Stomach (tissue), 19 donors: ENCODE measurements at regions of chr11 and their contacts with region 1.

Region 1: GRCh38 chr11:75203138-75203537 is 37.4 kb upstream of the TPBGL start:
- DNase-seq: no peak
- H3K4me3 ChIP-seq: no peak overlapping the region
- H3K27ac ChIP-seq: no peak overlapping the region
- H3K4me1 ChIP-seq: no peaks in the 10 kb centered on the region
- H3K27me3 ChIP-seq: peaks cover 0 to 5% (median 0%) of the 10 kb centered on the region in 3 donors
- CTCF ChIP-seq: no peak
- EP300 ChIP-seq: no peak
- POLR2A ChIP-seq: no peak

Region 2: DNA sequence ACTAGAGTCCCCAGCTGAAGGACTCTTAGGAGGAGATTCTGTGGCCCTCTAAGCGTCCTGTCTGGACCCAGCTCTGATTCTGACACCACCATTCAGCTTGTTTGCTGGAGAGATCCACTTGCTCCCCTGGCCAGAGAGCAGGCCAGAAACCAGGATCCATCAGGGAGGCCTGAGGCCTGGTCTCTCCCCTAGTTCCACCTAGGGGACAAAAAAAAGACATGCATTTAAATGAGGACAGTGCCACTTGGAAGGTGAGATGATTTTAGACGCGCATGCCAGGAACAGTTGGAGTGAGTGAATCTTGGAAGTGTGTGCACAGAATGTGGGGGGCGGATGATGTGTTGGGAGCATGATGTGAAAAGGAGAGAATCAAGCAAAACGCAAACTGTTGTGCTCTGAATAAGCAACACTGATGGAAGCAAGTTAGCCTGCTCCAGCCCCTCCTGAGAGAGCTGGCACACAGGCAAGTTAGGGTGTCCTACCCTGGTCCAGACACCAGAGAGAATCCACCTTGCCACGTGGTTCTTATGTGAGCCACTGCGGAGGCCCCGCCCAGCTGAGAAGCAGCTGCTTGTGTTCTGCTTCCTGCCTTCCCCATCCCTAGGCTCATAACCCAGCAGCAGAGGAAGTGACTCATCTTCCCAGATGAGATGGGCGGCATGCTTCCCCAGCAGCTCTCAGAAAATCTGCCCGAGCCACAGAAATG is 60.3 kb before region 1 on chr11:
- intact Hi-C with region 1: loop called (anchors 2 kb)
- DNase-seq: peak; percentile 44 to 86
- H3K4me3 ChIP-seq: no peak overlapping the region
- H3K27ac ChIP-seq: peak overlapping the region in 1 of 5 donors; percentile 52
- H3K4me1 ChIP-seq: peaks cover 0 to 38% (median 12%) of the 10 kb centered on the region in 4 donors
- H3K27me3 ChIP-seq: no peaks in the 10 kb centered on the region
- CTCF ChIP-seq: no peak
- EP300 ChIP-seq: no peak
- POLR2A ChIP-seq: no peak

Region 3: GRCh38 chr11:75248690-75249268 is 45.6 kb after region 1 on chr11:
- intact Hi-C with region 1: no loop called
- DNase-seq: peak; percentile 89 to 96
- H3K4me3 ChIP-seq: no peak overlapping the region
- H3K27ac ChIP-seq: no peak overlapping the region
- H3K4me1 ChIP-seq: peaks cover 0 to 9% (median 4%) of the 10 kb centered on the region in 4 donors
- H3K27me3 ChIP-seq: peaks cover 0 to 22% (median 0%) of the 10 kb centered on the region in 3 donors
- CTCF ChIP-seq: peak in 6 of 7 experiments; percentile 31 to 98 (median 94)
- EP300 ChIP-seq: no peak
- POLR2A ChIP-seq: no peak

Region 4: DNA sequence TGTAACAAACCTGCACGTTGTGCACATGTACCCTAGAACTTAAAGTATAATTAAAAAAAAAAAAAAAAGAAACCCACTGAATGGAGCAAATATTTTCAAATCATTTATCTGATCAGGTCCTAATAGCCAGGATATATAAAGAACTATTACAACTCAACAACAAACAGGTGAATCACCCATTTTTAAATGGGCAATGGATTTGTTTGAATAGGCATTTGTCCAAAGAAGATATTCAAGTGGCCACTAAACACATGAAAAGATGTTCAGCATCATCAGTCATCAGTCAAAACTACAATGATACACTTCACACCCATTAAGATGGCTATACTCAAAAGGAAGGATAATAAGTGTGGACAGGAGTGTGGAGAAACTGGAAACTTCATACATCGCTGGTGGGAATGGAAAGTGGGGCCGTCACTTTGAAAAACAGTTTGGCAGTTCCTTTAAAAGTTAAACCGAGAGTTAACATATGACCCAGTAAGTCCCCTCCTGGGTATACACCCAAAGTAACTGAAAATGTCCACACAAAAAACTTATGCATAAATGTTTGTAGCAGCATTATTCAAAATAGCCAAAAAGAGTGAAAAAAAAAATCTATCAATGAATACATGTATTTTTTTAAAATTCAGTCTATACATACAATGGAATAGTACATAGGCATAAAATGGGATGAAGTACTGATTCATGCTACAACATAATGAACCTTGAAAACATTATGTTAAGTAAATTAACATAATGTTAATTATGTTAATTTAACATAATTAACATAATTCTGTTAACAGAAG is 95.2 kb after region 1 on chr11:
- intact Hi-C with region 1: no loop called
- DNase-seq: no peak
- H3K4me3 ChIP-seq: no peak overlapping the region
- H3K27ac ChIP-seq: no peak overlapping the region
- H3K4me1 ChIP-seq: peaks cover 20 to 31% (median 31%) of the 10 kb centered on the region in 4 donors
- H3K27me3 ChIP-seq: no peaks in the 10 kb centered on the region
- CTCF ChIP-seq: no peak
- EP300 ChIP-seq: no peak
- POLR2A ChIP-seq: no peak

Region 5: DNA sequence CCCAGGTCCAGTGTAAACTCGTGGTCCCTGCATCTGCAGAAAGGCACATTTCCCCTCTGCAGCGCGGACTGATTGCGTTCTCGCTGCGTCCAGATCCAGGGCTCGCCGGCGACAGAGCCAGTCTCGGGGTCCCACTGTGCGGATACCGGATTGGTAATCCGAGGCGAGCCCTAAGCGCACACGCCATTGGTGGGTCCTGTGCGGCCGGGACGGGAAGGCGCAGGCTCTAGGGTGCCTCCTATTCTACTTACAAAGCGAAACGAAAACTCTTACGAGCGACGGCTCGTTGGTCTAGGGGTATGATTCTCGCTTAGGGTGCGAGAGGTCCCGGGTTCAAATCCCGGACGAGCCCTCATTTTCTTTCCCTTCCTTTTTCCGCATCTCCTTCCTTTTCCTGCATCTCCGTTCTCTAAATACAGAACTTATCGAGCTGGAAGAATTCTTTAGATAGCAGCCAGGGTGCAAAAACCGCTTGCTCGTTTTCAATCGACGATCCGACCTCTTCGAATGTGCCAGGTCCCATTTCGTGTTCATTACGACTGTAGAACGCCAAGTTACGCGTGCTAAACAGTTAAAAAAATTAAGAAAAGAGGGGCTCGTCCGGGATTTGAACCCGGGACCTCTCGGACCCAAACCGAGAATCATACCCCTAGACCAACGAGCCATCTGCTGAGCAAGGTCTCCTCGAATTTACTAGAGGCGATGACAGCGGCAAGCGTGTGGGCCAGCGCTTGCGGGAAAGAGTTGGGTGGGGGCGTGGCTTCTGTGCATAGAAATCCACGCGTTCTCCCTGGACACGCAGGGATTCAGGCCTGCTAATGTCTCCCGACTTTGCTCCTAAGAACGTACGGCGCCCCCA is 1032.3 kb after region 1 on chr11:
- intact Hi-C with region 1: no loop called
- DNase-seq: peak; percentile 89 to 97
- H3K4me3 ChIP-seq: peak overlapping the region; percentile 80 to 97 (median 91)
- H3K27ac ChIP-seq: peak overlapping the region; percentile 64 to 90 (median 86)
- H3K4me1 ChIP-seq: peaks cover 9 to 27% (median 21%) of the 10 kb centered on the region in 4 donors
- H3K27me3 ChIP-seq: no peaks in the 10 kb centered on the region
- CTCF ChIP-seq: no peak
- EP300 ChIP-seq: no peak
- POLR2A ChIP-seq: no peak